Panc1 (cell line): ENCODE measurements at regions of chr3 and their contacts with region 1.

Region 1: GRCh38 chr3:122505676-122506075 is 9.1 kb downstream of the KPNA1 start:
- DNase-seq: no peak
- ATAC-seq: no peak
- H3K4me3 ChIP-seq: no peak overlapping the region
- H3K27ac ChIP-seq: no peak overlapping the region
- H3K4me1 ChIP-seq: peaks cover 2% of the 10 kb centered on the region
- H3K27me3 ChIP-seq: no peaks in the 10 kb centered on the region
- CTCF ChIP-seq: no peak

Region 2: DNA sequence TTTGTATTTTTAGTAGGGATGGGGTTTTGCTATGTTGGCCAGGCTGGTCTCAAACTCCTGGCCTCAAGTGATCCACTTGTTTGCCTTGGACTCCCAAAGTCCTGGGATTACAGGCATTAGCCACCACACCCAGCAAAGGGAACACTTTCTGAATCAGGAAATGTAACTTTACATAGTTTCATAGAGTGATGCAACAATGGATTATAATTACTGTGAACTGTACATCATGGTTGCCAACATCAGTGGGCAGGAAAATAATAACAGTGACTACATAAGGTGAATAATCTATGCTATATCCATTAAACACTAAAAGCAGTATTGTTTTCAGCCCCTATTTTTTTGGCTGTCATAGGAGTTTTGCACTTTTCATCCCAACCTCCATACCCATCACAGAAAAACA is 14.0 kb after region 1 on chr3:
- CTCF ChIA-PET with region 1: no interaction called
- POLR2A ChIA-PET with region 1: interaction called, 10 read pairs
- in situ Hi-C with region 1: no loop called
- intact Hi-C with region 1: no loop called
- DNase-seq: no peak
- ATAC-seq: no peak
- H3K4me3 ChIP-seq: no peak overlapping the region
- H3K27ac ChIP-seq: no peak overlapping the region
- H3K4me1 ChIP-seq: no peaks in the 10 kb centered on the region
- H3K27me3 ChIP-seq: no peaks in the 10 kb centered on the region
- CTCF ChIP-seq: no peak

Region 3: DNA sequence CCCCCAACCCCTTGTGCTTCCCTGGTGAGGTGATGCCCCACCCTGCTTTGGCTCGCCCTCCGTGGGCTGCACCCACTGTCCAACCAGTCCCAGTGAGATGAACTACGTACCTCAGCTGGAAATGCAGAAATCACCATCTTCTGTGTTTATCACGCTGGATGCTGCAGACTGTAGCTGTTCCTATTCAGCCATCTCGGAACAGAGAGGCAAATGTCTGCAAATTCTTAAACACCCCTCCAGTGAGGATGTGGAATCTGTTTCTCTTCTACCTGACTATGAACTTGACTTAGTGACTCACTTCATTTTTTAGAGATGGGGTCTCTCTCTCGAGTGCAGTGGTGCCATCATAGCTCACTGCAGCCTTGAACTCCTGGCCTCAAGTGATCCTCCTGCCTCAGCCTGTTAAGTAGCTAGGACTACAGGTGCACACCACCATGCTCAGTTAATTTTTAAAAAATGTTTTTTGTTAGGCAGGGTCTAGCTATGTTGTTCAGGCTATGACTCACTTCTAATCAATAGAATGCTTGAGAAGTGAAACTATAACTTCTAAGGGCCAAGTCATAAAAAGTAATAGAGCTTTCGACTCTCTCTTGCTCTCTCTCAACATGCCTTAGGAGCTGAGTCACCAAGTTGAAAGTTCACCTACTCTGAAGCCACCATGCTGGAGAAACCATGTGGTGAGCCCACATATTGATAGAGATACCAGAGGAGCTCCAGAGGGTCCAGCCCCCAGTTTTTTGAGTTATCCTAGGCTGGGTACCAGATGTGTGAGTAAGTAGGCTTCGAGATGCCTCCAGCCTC is 163.5 kb after region 1 on chr3:
- CTCF ChIA-PET with region 1: no interaction called
- POLR2A ChIA-PET with region 1: no interaction called
- in situ Hi-C with region 1: no loop called
- intact Hi-C with region 1: no loop called
- DNase-seq: no peak
- ATAC-seq: peak; percentile 96
- H3K4me3 ChIP-seq: no peak overlapping the region
- H3K27ac ChIP-seq: peak overlapping the region; percentile 71
- H3K4me1 ChIP-seq: peaks cover 11% of the 10 kb centered on the region
- H3K27me3 ChIP-seq: no peaks in the 10 kb centered on the region
- CTCF ChIP-seq: no peak